CD8-positive, alpha-beta memory T cell (primary cell): ENCODE measurements at regions of chr4 and their contacts with region 1.

Region 1: DNA sequence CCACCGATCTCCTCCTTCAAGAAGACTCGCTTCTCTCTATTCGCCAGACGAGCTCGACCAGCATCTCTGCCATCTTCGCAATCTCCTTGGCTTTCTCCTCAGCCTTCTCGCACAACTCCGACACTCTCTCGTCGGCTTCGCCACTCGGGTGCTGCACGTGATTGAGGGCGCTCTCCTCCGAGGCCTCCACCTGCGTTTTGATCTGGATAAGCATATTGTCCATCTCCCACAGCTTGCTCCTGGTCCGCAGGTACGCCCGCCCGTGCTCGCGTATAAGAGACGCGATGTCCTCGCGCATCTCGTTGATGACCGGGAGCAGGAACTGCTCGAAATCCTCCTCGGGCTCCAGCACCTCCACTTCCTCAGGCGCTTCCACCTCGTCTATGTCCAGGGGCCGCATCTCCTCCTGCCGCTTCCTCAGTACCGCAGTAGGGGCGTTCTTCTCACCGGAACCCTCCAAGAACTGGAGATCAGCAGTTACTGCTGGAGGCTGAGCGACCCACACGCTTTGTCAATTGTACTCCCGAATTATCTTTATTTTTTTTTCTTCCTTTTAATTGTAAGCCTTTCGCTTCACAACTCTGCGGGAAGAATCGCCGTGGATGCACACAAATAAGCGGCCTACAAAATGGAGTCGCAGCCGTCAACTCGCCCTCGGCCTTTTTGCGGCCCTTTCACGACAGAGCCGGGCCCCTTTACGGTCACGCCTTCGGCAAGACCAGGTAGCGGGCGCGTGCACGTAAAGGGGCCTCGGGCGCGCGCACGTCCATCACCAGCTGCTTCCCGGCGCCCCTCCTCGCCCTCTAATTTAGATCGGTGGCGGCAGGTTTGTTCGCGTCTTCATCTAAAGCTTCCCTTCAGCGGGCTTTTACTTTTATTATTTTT is at the start of gene MRFAP1L1:
- DNase-seq: peak; percentile 96 to 98 (median 97)
- H3K4me3 ChIP-seq: peak within 1 kb of the TSS; percentile 88
- H3K4me3 Mint-ChIP-seq: peak within 1 kb of the TSS; percentile 98 to 100 (median 99)
- H3K27ac ChIP-seq: peak within 1 kb of the TSS; percentile 88
- H3K27ac Mint-ChIP-seq: peak within 1 kb of the TSS; percentile 93 to 100 (median 98)
- H3K4me1 ChIP-seq: peaks cover 51% of the 10 kb centered on the region
- H3K4me1 Mint-ChIP-seq: peaks cover 57 to 64% (median 64%) of the 10 kb centered on the region in 3 donors
- H3K27me3 ChIP-seq: no peaks in the 10 kb centered on the region
- H3K27me3 Mint-ChIP-seq: no peaks in the 10 kb centered on the region
- total RNA-seq, gene MRFAP1L1: 54.9 to 55.9 TPM

Region 2: DNA sequence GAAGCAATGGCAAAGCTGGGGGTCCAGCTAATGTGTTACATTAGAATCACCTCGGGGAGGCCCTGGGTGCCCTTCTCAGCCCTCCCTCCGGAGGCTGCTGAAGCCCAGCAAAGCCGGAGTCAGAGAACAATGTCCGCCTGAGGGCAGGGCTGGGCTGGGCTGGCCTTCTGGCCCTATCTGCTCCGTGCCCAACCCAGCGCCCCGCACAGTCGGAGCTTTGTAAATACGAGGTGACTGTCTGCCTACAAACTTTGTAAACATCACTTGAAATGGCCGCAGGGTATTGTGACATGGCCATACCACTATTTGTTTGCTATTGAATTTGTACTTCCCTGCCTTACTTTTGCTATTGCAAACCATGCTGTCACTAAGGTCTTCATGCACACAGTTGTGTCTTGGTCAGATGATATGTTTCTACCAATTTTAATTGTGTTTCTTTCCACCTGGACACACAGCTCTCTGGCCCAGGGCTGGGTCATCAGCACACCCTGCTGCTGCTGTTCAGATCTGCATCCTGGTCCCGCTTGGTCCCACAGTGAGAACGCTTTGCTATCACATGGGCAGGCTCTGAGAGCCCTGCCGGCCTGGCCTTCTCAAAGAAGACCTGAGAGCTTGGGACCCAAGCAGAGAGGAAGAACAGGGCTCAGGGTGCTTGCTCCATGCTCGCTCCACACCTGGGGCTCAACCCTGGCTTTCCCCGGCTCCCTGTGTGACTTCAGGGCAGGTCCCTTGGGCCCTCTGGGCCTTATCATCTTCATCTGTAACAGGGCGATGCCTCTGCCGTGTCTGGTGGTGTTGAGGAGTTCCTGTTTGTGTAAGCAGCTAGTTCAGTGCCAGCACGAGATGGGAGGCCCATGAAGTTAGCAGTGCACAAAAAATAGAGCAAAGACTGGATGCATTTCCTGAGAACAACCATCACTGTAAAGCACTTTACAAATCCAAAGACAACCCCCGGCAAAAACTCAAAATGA is 13.5 kb before region 1 on chr4:
- CTCF ChIA-PET with region 1: interaction called, 19 read pairs
- POLR2A ChIA-PET with region 1: interaction called, 41 read pairs
- DNase-seq: peak; percentile 47 to 80 (median 71)
- H3K4me3 ChIP-seq: peak overlapping the region; percentile 45
- H3K4me3 Mint-ChIP-seq: peak overlapping the region; percentile 5 to 92 (median 65)
- H3K27ac ChIP-seq: peak overlapping the region; percentile 40
- H3K27ac Mint-ChIP-seq: peak overlapping the region; percentile 86 to 99 (median 95)
- H3K4me1 ChIP-seq: peaks cover 89% of the 10 kb centered on the region
- H3K4me1 Mint-ChIP-seq: peaks cover 74 to 88% (median 85%) of the 10 kb centered on the region in 3 donors
- H3K27me3 ChIP-seq: no peaks in the 10 kb centered on the region
- H3K27me3 Mint-ChIP-seq: peaks cover 0 to 3% of the 10 kb centered on the region in 2 donors